A673 (cell line): ENCODE measurements at regions of chr2 and their contacts with region 1.

Region 1: GRCh38 chr2:207046724-207047123 is 107.4 kb downstream of the CPO start:
- DNase-seq: peak; percentile 88
- H3K4me3 ChIP-seq: no peak overlapping the region
- H3K27ac ChIP-seq: no peak overlapping the region
- H3K4me1 ChIP-seq: peaks cover 12% of the 10 kb centered on the region
- H3K27me3 ChIP-seq: no peaks in the 10 kb centered on the region
- CTCF ChIP-seq: peak; percentile 62

Region 2: DNA sequence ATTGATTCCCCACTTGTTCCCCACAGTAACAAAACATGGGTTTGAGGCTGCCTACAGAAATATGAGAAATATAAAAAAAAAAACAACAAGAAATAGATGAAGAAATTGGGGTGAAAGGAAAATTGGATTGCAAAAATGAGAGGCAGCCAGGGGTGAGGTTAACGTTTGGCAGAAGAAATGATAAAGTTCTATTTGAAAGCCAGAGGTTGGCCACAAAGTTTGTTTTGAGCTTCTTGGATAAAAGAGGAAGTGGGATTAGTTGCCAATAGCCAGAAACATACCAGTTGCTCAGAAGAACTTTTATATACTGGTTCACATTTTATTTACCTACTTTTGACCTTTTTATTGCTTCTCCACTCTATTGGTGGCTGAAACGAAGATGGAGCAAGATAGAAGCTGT is 213.9 kb before region 1 on chr2:
- CTCF ChIA-PET with region 1: no interaction called
- POLR2A ChIA-PET with region 1: interaction called, 16 read pairs
- intact Hi-C with region 1: no loop called
- DNase-seq: no peak
- H3K4me3 ChIP-seq: no peak overlapping the region
- H3K27ac ChIP-seq: no peak overlapping the region
- H3K4me1 ChIP-seq: no peaks in the 10 kb centered on the region
- H3K27me3 ChIP-seq: no peaks in the 10 kb centered on the region
- CTCF ChIP-seq: no peak